Mammary epithelial cell (primary cell): ENCODE measurements at regions of chr1 and their contacts with region 1.

Region 1: GRCh38 chr1:178725603-178726517 is 816 bp downstream of the RALGPS2 start:
- DNase-seq: peak; percentile 89
- H3K4me3 ChIP-seq: peak overlapping the region; percentile 55 to 80 (median 57)
- H3K27ac ChIP-seq: peak overlapping the region; percentile 85
- H3K4me1 ChIP-seq: peaks cover 15% of the 10 kb centered on the region
- H3K27me3 ChIP-seq: no peaks in the 10 kb centered on the region
- CTCF ChIP-seq: peak in 1 of 2 donors; percentile 19

Region 2: DNA sequence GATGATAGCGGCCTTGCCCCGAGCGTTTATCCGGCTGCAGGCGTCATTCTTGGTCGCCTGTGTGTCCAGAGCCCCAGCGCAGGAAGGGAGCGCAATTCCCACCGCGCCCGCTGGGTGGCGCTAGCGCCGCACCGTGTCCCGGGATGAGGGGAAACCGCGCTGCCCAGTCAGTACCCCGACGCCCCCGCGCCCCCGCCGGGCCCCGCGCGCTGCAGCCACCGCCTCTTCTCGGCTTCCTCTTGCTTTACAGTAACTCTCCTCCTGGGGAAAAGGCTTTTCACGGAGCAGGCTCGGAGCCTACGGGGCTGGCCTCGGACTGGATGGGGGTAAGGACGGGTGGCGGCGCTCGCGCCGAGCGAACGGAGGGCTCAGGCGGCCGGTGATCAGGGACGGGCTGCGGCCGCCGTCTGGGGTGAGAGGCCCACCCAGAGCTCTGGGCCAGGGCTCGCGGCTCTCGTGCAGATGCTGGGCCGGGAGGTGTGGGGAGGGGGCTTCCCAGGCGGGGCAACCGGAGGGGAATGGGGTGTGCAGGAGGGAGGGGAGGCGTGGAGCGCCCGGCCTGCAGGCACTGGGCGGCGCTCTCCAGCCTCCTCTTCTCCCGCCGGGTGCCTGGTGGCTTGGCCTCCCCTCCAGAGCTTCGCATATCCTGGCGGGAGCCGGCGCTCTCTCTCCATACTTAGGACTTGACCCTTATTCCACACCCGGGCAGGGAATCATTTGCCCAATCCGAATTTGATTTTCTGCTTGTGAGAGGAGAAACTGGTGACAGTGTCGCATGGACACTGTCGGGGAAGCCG is 183.1 kb before region 1 on chr1:
- CTCF ChIA-PET with region 1: interaction called, 5 read pairs
- dilution Hi-C with region 1: no loop called
- in situ Hi-C with region 1: no loop called
- intact Hi-C with region 1: loop called (anchors 2 kb)
- DNase-seq: peak; percentile 76
- H3K4me3 ChIP-seq: peak overlapping the region; percentile 49 to 85 (median 71)
- H3K27ac ChIP-seq: peak overlapping the region; percentile 17
- H3K4me1 ChIP-seq: peaks cover 20% of the 10 kb centered on the region
- H3K27me3 ChIP-seq: no peaks in the 10 kb centered on the region
- CTCF ChIP-seq: peak; percentile 73 to 90

Region 3: GRCh38 chr1:178566187-178566586 is 159.7 kb before region 1 on chr1:
- CTCF ChIA-PET with region 1: no interaction called
- dilution Hi-C with region 1: no loop called
- in situ Hi-C with region 1: no loop called
- intact Hi-C with region 1: loop called (anchors 5 kb)
- DNase-seq: peak; percentile 58
- H3K4me3 ChIP-seq: no peak overlapping the region
- H3K27ac ChIP-seq: no peak overlapping the region
- H3K4me1 ChIP-seq: no peaks in the 10 kb centered on the region
- H3K27me3 ChIP-seq: no peaks in the 10 kb centered on the region
- CTCF ChIP-seq: no peak

Region 4: DNA sequence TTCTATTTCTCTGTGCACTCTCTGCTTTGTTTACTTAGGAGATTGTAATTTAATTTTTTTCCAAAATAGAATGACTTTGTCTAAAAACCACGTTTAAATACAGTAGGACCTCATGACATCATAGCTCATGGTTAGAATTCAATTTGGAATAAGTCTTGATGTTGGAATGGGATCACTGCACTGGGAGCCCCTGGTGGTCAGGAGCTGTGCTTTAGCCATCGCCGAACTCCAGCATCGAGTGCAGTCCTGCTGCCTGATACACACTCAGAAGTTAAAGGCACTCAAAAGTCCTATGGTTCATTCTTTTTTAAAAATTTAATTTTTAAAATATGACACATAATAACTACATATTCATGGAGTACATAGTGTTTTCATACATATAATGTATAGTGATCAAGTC is 137.9 kb before region 1 on chr1:
- CTCF ChIA-PET with region 1: no interaction called
- dilution Hi-C with region 1: no loop called
- in situ Hi-C with region 1: no loop called
- intact Hi-C with region 1: no loop called
- DNase-seq: no peak
- H3K4me3 ChIP-seq: no peak overlapping the region
- H3K27ac ChIP-seq: no peak overlapping the region
- H3K4me1 ChIP-seq: no peaks in the 10 kb centered on the region
- H3K27me3 ChIP-seq: no peaks in the 10 kb centered on the region
- CTCF ChIP-seq: no peak

Region 5: GRCh38 chr1:178607718-178608408 is 118.0 kb before region 1 on chr1:
- CTCF ChIA-PET with region 1: no interaction called
- dilution Hi-C with region 1: loop called (anchors 10 kb)
- in situ Hi-C with region 1: no loop called
- intact Hi-C with region 1: loop called (anchors 1 kb)
- DNase-seq: no peak
- H3K4me3 ChIP-seq: no peak overlapping the region
- H3K27ac ChIP-seq: peak overlapping the region; percentile 85
- H3K4me1 ChIP-seq: peaks cover 46% of the 10 kb centered on the region
- H3K27me3 ChIP-seq: no peaks in the 10 kb centered on the region
- CTCF ChIP-seq: no peak

Region 6: GRCh38 chr1:178749581-178750166 is 23.8 kb after region 1 on chr1:
- CTCF ChIA-PET with region 1: interaction called, 16 read pairs
- dilution Hi-C with region 1: no loop called
- in situ Hi-C with region 1: no loop called
- intact Hi-C with region 1: no loop called
- DNase-seq: no peak
- H3K4me3 ChIP-seq: no peak overlapping the region
- H3K27ac ChIP-seq: no peak overlapping the region
- H3K4me1 ChIP-seq: no peaks in the 10 kb centered on the region
- H3K27me3 ChIP-seq: no peaks in the 10 kb centered on the region
- CTCF ChIP-seq: no peak

Region 7: DNA sequence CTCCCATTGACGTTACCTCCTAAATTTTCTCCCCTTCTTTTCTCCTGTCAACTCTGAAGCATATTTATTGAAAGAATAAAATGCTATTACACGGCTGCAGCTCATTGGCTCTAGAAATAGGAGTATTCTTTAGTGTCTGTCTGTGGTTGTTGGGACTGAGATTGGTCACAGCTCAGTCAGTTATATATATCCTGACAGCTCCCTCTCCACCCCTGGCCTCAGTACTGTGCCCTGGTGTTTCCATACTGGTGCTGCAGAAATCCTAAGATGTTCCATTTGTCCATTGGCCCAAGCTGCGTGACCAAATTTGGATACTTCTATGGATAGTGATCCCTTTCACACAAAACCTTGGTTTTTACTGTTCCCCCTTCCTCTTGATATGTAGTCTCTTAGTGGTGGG is 66.5 kb after region 1 on chr1:
- CTCF ChIA-PET with region 1: no interaction called
- dilution Hi-C with region 1: no loop called
- in situ Hi-C with region 1: no loop called
- intact Hi-C with region 1: no loop called
- DNase-seq: no peak
- H3K4me3 ChIP-seq: no peak overlapping the region
- H3K27ac ChIP-seq: no peak overlapping the region
- H3K4me1 ChIP-seq: no peaks in the 10 kb centered on the region
- H3K27me3 ChIP-seq: no peaks in the 10 kb centered on the region
- CTCF ChIP-seq: no peak